GM13977 (cell line): ENCODE measurements at regions of chr18 and their contacts with region 1.

Region 1: GRCh38 chr18:3245853-3246634 is 1.6 kb upstream of the MYL12A start:
- DNase-seq: peak; percentile 75
- CTCF ChIP-seq: peak; percentile 98

Region 2: DNA sequence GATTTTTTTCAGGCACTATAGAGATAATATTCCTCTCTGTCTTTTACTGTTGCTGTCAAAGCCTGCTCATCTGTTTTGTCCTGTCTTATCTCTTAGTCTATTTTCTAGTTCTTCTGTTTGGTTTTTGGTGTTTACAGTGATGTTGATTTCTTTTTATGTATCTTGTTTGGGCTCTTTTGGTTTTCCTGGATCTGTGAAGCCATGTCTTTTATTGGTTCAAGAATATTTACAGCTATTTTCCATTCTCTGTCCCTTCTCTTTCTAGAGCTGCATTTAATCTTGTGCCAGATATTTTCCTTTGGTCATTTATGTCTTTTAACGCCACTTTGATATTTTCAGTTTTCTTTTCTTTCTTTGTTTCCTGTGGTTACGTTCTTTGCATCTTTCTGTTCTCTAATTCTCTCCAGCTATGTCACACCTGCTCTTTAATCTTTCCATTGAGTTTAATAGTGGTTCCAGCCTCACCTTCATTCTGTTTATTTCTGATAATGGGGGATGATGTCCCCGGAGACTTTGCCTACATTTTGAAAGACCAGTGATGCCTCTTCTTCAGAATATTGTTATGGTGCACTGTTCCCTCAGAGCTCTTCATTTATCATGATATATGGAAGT is 558.5 kb before region 1 on chr18:
- in situ Hi-C with region 1: no loop called
- DNase-seq: peak; percentile 35
- CTCF ChIP-seq: no peak

Region 3: DNA sequence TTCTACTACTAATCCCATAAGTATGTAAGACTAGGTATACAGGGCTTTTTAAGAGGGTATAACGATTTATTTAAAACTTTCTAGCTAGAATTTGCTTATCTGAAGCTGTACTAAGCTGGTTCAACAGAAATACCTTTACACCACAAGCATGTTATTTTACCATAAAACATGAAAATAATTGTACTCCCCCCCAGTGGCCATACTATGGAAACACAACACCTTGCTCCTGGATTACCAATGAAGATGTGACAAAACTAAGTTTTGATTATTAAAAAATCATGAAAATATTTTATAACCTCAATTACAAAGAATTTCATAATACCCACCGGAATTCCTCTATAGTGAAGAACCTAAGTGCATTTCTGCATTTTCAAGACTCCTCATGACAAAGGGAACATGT is 260.4 kb before region 1 on chr18:
- in situ Hi-C with region 1: loop called (anchors 10 kb)
- DNase-seq: peak; percentile 40
- CTCF ChIP-seq: peak; percentile 65

Region 4: DNA sequence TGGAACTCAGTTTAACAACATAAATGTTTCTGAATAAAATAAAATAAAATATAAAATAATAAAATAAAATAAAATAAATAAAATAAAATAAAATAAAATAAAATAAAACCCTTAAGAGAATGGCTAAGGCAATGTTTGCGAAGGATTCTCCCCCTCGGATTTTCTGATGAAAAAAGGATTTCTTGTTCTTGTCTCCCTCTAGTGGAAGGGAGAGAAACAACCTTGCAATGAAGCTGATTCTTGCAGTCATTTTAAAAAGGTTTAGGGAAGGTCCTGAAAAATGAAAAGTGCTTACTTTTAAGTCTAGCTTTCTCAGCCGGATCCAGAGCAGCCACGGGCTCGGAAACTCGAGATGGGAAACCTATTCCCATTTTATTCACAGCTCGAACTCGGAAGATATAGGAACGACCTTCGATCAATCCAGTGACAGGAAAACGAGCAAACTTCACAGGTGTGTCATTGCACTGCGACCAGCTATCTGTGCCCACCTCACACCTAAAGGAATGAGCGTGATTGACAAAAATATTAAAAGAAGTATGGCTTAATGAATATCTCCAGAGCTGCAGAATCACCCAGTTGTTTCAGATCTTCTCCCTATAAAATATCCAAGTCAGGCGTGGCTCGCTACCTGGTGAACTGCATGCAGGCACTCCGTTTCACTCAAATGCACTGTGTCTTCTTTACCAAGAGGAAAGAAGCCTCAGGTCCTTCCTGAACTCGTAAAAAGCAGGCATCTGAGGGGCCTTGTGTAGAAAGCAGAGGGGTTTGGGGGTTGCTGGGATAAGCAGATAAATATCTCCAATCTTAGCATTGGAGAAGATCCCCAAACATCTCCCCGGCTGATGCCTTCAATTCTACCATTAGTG is 94.4 kb before region 1 on chr18:
- in situ Hi-C with region 1: loop called (anchors 10 kb)
- DNase-seq: peak; percentile 66
- CTCF ChIP-seq: peak; percentile 70